ENCODE measurements at regions of chr3 and their contacts with region 1.

Region 1: GRCh38 chr3:36959821-36960220 is 15.0 kb upstream of the TRANK1 start:
- DNase-seq: no peak
- ATAC-seq: no peak
- H3K4me3 ChIP-seq: no peak overlapping the region
- H3K27ac ChIP-seq: no peak overlapping the region
- H3K4me1 ChIP-seq: peaks cover 0 to 11% (median 3%) of the 10 kb centered on the region in 4 donors
- H3K27me3 ChIP-seq: no peaks in the 10 kb centered on the region
- CTCF ChIP-seq: no peak
- POLR2A ChIP-seq: no peak

Region 2: GRCh38 chr3:36904641-36905040 is 55.2 kb before region 1 on chr3:
- intact Hi-C with region 1: loop called in 1 of 2 experiments (anchors 5 kb)
- DNase-seq: peak in 1 of 3 donors; percentile 53
- ATAC-seq: peak; percentile 71 to 87 (median 76)
- H3K4me3 ChIP-seq: no peak overlapping the region
- H3K27ac ChIP-seq: no peak overlapping the region
- H3K4me1 ChIP-seq: peaks cover 0 to 11% (median 0%) of the 10 kb centered on the region in 4 donors
- H3K27me3 ChIP-seq: no peaks in the 10 kb centered on the region
- CTCF ChIP-seq: peak; percentile 65 to 82 (median 70)
- POLR2A ChIP-seq: no peak

Measured in right lobe of liver (tissue), 6 donors.